A549 (cell line): ENCODE measurements at regions of chr10 and their contacts with region 1.

Region 1: DNA sequence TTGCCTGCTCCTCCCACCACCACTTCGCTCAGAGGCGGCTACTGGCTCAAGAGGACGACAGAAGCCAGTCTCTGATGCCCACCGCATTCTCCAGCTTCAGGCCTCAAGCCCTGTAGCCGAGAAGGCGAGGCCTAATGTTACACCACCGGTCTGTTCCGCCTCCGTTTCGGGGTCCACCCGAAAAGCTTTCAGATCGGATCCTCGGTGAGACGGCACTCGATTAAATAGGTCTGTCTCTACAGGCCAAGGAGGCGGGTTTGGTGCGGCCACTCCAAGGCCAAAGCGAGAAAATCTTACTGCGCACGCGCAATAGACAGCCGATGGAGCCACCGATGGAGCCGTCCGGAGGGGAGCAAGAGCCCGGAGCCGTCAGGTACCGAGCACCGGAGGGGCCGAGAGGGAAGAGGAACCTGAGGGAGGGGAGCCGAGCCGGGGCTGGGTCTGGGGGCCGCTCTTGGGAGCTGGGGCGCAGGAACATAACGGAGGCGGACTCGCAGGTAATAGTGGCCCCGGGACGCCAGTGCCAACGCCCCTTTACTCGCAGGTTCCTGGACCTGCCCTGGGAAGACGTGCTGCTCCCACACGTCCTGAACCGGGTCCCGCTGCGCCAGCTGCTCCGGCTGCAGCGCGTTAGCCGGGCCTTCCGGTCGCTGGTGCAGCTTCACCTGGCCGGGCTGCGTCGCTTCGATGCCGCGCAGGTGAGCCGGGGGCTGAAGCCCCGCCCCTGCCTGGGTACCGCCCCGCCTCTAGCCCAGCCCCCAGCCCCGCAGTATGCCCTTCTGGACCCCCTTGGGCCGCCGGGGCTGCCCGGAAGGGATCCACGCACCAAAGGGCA is at the start of gene FBXL15:
- DNase-seq: peak; percentile 93 to 98
- ATAC-seq: peak; percentile 52 to 82
- H3K4me3 ChIP-seq: peak within 1 kb of the TSS; percentile 57
- H3K27ac ChIP-seq: peak within 1 kb of the TSS; percentile 86 to 90
- H3K4me1 ChIP-seq: peaks cover 25% of the 10 kb centered on the region
- CTCF ChIP-seq: no peak
- EP300 ChIP-seq: no peak
- POLR2A ChIP-seq: peak; percentile 56
- RAD21 ChIP-seq: peak in 1 of 2 experiments; percentile 7; a peak in 1 of 5 replicates
- polyA plus RNA-seq, gene FBXL15: 3.7 and 4.8 TPM in 2 replicates

Region 2: GRCh38 chr10:102384053-102384452 is 37.0 kb before region 1 on chr10:
- CTCF ChIA-PET with region 1: interaction called, 12 read pairs
- POLR2A ChIA-PET with region 1: no interaction called
- DNase-seq: no peak
- ATAC-seq: peak in 1 of 2 experiments; percentile 63; a peak in 3 of 6 replicates
- H3K4me3 ChIP-seq: no peak overlapping the region
- H3K27ac ChIP-seq: no peak overlapping the region
- H3K4me1 ChIP-seq: no peaks in the 10 kb centered on the region
- CTCF ChIP-seq: no peak
- EP300 ChIP-seq: no peak
- POLR2A ChIP-seq: no peak
- RAD21 ChIP-seq: no peak

Region 3: DNA sequence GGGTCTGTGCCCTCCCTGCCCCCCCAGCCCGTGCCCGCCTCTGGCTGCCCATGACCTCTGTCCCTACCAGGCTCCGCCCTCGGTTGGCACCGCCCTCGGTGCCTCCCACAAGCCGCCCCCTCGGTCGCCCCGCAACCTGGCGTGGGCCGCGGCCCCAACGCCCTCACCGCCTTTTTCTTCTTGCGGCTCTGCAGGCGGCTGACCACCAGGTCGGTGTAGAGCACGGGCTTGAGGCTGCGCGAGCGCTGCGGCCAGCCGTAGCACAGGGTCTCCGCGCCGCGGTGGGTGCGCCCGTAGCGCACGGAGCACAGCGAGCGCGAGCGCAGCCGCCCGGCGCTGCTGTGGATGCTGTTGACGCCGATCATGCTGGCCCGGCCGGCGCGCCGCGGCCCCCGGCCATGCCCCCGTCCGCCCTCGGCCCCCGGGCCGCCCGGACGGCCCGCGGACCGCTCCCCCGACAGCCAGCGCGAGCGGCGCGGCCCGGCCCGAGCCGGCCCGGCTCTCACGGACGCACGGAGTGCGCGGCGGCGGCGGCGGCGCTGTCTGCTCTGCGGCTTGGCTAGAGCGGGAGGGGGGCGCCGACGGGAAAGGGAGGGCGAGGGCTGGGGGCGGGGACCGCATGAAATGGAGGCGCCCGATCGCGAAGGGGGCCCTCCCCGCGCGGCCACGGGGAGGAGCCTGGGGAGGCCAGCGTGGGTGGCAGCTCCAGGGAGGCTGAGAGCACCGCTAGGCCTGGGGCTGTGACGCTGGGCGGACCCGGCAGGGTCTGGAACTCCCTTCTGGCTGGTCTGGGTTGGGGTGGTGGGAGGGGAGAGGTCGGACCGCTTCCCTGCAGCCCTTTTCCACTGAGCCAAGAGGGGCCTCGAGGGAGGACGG is 12.1 kb before region 1 on chr10:
- CTCF ChIA-PET with region 1: interaction called, 337 read pairs
- POLR2A ChIA-PET with region 1: interaction called, 6 read pairs
- DNase-seq: no peak
- ATAC-seq: peak; percentile 9 to 15; a peak in 4 of 6 replicates
- H3K4me3 ChIP-seq: peak overlapping the region; percentile 65
- H3K27ac ChIP-seq: peak overlapping the region; percentile 36 to 73; a peak in 4 of 6 replicates
- H3K4me1 ChIP-seq: peaks cover 3% of the 10 kb centered on the region; the same call in 1 of the 3 replicates
- CTCF ChIP-seq: no peak
- EP300 ChIP-seq: no peak
- POLR2A ChIP-seq: no peak
- RAD21 ChIP-seq: no peak

Region 4: DNA sequence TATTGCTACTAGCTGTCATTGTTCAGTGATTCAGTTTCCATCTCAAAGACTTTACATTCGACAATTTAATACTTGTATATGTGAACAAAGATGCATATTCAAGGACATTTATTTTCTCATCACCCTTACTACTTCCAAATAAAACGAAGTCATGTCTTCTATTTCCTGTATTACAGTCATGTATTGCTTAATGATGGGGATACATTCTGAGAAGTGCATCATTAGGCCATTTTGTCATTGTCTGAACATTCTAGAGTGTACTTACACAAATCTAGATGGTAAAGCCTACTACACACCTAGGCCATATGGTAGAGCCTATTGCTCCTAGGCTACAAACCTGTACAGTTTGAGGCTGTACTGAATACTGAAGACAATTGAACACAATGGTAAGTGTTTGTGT is 23.8 kb after region 1 on chr10:
- CTCF ChIA-PET with region 1: interaction called, 13 read pairs
- POLR2A ChIA-PET with region 1: interaction called, 4 read pairs
- DNase-seq: no peak
- ATAC-seq: no peak
- H3K4me3 ChIP-seq: no peak overlapping the region
- H3K27ac ChIP-seq: no peak overlapping the region
- H3K4me1 ChIP-seq: peaks cover 4% of the 10 kb centered on the region
- CTCF ChIP-seq: no peak
- EP300 ChIP-seq: no peak
- POLR2A ChIP-seq: no peak
- RAD21 ChIP-seq: no peak

Region 5: DNA sequence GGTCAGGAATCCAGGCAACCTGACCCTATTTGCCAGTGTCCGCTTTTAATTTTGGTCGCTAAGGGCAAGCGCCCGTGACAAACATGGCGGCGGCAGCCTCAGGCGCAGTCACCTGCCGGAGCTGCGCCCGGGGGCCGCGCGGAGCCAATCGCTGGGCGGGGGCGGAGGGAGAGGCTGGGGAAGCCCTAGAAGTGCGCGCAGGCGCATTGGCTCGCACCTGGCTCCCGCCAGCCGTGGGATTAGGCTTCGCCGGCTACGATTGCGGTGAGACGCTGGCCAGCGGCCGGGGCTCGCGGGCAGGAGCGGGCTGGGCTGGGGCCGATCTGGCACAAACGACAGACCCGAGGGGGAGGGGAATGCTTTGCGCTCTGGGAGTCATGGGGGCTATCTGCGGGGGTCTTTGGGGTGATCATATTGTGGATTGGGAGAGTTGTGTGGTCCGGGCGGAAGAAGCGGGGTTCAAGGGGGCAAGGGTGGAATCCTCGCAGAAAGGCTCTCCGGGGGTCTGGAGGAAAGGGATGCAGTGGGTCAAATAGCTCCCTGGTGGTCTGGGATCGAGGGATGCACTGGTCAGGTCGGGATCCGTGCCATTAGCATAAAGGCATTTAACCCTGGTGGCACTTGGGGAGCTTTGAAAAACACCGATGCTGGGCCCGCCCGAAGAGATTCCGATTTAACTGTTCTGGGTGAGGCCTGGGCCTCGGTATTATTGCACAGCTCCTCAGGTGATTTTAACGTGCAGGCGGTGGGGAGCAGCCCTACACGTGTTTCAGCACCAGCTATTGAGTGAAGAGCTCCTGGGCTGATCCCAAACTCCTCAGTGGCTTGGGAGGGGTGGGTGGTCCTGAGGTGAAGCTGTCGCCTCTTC is 40.4 kb after region 1 on chr10:
- CTCF ChIA-PET with region 1: interaction called, 17 read pairs
- POLR2A ChIA-PET with region 1: no interaction called
- DNase-seq: peak; percentile 87 to 98
- ATAC-seq: peak; percentile 90 to 97
- H3K4me3 ChIP-seq: peak overlapping the region; percentile 58
- H3K27ac ChIP-seq: peak overlapping the region; percentile 77 to 84
- H3K4me1 ChIP-seq: peaks cover 12% of the 10 kb centered on the region
- CTCF ChIP-seq: no peak
- EP300 ChIP-seq: no peak
- POLR2A ChIP-seq: peak; percentile 67
- RAD21 ChIP-seq: no peak

Region 6: DNA sequence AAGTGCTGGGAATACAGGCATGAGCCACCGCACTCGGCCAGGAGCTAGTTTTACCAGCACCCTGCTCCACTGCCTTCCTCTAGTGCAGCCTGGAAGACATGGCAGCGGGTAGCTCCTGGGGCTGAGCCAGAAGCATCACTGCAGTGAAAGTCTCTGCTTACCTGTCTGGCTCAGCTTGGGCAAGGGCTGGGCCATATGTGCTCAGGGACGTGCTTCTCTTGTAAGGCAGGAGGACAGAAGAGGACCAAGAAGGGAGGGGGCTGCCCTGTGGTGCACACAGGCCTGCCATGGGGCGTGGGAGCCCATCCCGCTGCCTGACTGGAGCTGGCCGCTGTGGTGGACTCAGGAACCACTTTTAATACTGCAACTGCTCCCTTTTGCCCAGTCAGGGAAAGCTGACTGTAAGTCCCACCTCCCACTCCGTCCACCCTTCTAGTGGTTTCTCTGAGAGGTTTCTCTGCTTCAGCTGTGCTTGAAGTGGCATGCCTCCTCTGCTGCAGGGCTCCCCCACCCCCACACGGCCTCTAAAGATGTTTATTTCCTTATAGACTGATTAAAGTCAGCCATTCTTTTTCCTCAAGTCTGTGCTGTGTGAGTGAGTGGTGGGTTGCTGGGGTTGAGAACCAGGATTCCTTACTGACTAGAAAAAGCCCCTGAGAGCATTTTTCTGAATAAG is 55.6 kb after region 1 on chr10:
- CTCF ChIA-PET with region 1: interaction called, 54 read pairs
- POLR2A ChIA-PET with region 1: interaction called, 3 read pairs
- DNase-seq: no peak
- ATAC-seq: no peak
- H3K4me3 ChIP-seq: no peak overlapping the region
- H3K27ac ChIP-seq: no peak overlapping the region
- H3K4me1 ChIP-seq: no peaks in the 10 kb centered on the region
- CTCF ChIP-seq: no peak
- EP300 ChIP-seq: no peak
- POLR2A ChIP-seq: no peak
- RAD21 ChIP-seq: no peak